ENCODE measurements at regions of chr5 and their contacts with region 1.

Region 1: GRCh38 chr5:40688127-40688761 is 8.5 kb downstream of the PTGER4 start:
- DNase-seq: peak; percentile 91
- ATAC-seq: peak; percentile 90
- H3K4me3 ChIP-seq: no peak overlapping the region
- H3K4me3 Mint-ChIP-seq: peak overlapping the region; percentile 9
- H3K27ac ChIP-seq: no peak overlapping the region
- H3K27ac Mint-ChIP-seq: peak overlapping the region; percentile 5
- H3K4me1 ChIP-seq: peaks cover 17 to 30% of the 10 kb centered on the region in 2 donors
- H3K4me1 Mint-ChIP-seq: peaks cover 53% of the 10 kb centered on the region
- H3K27me3 ChIP-seq: no peaks in the 10 kb centered on the region
- H3K27me3 Mint-ChIP-seq: no peaks in the 10 kb centered on the region
- CTCF ChIP-seq: peak; percentile 87

Region 2: DNA sequence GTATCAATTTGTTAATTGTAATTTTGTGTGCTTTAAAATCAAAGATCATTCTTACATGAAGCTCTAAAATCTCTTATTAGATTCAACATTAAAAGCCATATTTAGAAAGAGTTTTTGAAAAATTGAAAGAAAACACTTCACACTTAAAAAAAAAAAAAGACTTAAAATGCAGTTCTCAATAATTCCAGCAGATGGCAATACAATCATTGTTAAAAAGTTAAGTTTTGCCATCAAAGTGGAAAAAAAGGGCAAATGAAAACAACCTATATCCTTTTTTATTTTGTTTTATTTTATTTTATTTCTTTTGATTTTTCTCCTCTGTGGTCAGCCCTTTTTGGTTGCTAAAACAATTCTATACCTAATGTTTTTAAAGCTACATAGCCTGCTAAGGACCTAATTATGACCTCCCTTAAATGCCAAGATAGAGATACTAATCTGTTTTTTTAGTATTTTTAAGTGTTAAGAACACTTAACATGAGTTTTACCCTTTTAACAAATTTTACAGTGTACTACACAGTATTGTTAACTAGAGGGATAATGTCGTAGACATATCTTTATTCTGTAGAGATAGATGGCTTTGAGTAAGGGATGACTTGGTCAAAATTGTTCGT is 1109.3 kb before region 1 on chr5:
- CTCF ChIA-PET with region 1: interaction called, 7 read pairs
- POLR2A ChIA-PET with region 1: no interaction called
- intact Hi-C with region 1: loop called (anchors 1 kb)
- DNase-seq: peak; percentile 38
- ATAC-seq: no peak
- H3K4me3 ChIP-seq: no peak overlapping the region
- H3K4me3 Mint-ChIP-seq: no peak overlapping the region
- H3K27ac ChIP-seq: no peak overlapping the region
- H3K27ac Mint-ChIP-seq: no peak overlapping the region
- H3K4me1 ChIP-seq: peaks cover 7 to 11% of the 10 kb centered on the region in 2 donors
- H3K4me1 Mint-ChIP-seq: peaks cover 5% of the 10 kb centered on the region
- H3K27me3 ChIP-seq: no peaks in the 10 kb centered on the region
- H3K27me3 Mint-ChIP-seq: peaks cover 14% of the 10 kb centered on the region
- CTCF ChIP-seq: peak; percentile 95

Region 3: DNA sequence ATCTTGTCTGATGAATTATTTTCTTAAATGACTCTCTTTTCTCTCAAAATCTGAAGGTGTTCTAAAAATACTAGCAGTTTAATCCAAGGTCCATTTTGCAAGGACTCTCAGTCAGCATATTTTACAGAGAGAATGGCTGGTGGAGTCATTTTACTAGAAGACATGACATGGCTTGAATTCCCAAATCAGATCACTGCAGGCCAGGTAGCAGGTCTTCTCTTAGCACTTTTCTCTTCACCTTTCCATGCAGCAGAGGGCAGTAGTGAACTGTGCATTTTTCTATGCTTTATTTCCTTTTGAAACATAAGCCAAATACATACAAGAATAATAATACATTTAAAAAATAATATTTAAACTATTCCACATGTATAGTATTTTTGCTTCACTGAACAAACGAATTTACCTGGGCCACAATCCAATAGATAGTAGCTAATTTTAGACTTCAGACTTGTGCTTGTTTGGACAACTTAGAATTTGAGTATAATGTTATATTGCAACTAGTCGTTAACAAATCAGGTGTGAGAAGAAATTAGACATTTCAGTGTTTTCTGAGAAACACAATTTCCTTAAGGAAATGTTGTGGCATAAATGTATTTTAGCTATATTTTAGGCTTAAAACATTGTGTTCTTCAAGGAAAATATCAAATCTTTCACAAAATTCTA is 974.1 kb before region 1 on chr5:
- CTCF ChIA-PET with region 1: interaction called, 27 read pairs
- POLR2A ChIA-PET with region 1: no interaction called
- intact Hi-C with region 1: no loop called
- DNase-seq: peak; percentile 55
- ATAC-seq: no peak
- H3K4me3 ChIP-seq: no peak overlapping the region
- H3K4me3 Mint-ChIP-seq: no peak overlapping the region
- H3K27ac ChIP-seq: no peak overlapping the region
- H3K27ac Mint-ChIP-seq: no peak overlapping the region
- H3K4me1 ChIP-seq: no peaks in the 10 kb centered on the region
- H3K4me1 Mint-ChIP-seq: no peaks in the 10 kb centered on the region
- H3K27me3 ChIP-seq: peaks cover 0 to 3% (median 0%) of the 10 kb centered on the region in 4 experiments
- H3K27me3 Mint-ChIP-seq: no peaks in the 10 kb centered on the region
- CTCF ChIP-seq: peak; percentile 73

Region 4: GRCh38 chr5:40021007-40021406 is 667.2 kb before region 1 on chr5:
- CTCF ChIA-PET with region 1: interaction called, 92 read pairs
- POLR2A ChIA-PET with region 1: no interaction called
- intact Hi-C with region 1: loop called (anchors 1 kb)
- DNase-seq: peak; percentile 50
- ATAC-seq: peak; percentile 57
- H3K4me3 ChIP-seq: no peak overlapping the region
- H3K4me3 Mint-ChIP-seq: no peak overlapping the region
- H3K27ac ChIP-seq: no peak overlapping the region
- H3K27ac Mint-ChIP-seq: no peak overlapping the region
- H3K4me1 ChIP-seq: peaks cover 5 to 6% of the 10 kb centered on the region in 2 donors
- H3K4me1 Mint-ChIP-seq: peaks cover 20% of the 10 kb centered on the region
- H3K27me3 ChIP-seq: no peaks in the 10 kb centered on the region
- H3K27me3 Mint-ChIP-seq: no peaks in the 10 kb centered on the region
- CTCF ChIP-seq: peak; percentile 57

Region 5: GRCh38 chr5:40223884-40224402 is 464.3 kb before region 1 on chr5:
- CTCF ChIA-PET with region 1: no interaction called
- POLR2A ChIA-PET with region 1: no interaction called
- intact Hi-C with region 1: loop called (anchors 5 kb)
- DNase-seq: peak; percentile 33
- ATAC-seq: peak; percentile 11
- H3K4me3 ChIP-seq: no peak overlapping the region
- H3K4me3 Mint-ChIP-seq: peak overlapping the region; percentile 62
- H3K27ac ChIP-seq: no peak overlapping the region
- H3K27ac Mint-ChIP-seq: no peak overlapping the region
- H3K4me1 ChIP-seq: peaks cover 14 to 26% of the 10 kb centered on the region in 2 donors
- H3K4me1 Mint-ChIP-seq: peaks cover 34% of the 10 kb centered on the region
- H3K27me3 ChIP-seq: peaks cover 0 to 6% (median 2%) of the 10 kb centered on the region in 4 experiments
- H3K27me3 Mint-ChIP-seq: peaks cover 25% of the 10 kb centered on the region
- CTCF ChIP-seq: no peak

Region 6: GRCh38 chr5:40386289-40386688 is 302.0 kb before region 1 on chr5:
- CTCF ChIA-PET with region 1: interaction called, 4 read pairs
- POLR2A ChIA-PET with region 1: no interaction called
- intact Hi-C with region 1: loop called (anchors 5 kb)
- DNase-seq: peak; percentile 52
- ATAC-seq: peak; percentile 57
- H3K4me3 ChIP-seq: no peak overlapping the region
- H3K4me3 Mint-ChIP-seq: no peak overlapping the region
- H3K27ac ChIP-seq: no peak overlapping the region
- H3K27ac Mint-ChIP-seq: no peak overlapping the region
- H3K4me1 ChIP-seq: peaks cover 36 to 43% of the 10 kb centered on the region in 2 donors
- H3K4me1 Mint-ChIP-seq: peaks cover 45% of the 10 kb centered on the region
- H3K27me3 ChIP-seq: no peaks in the 10 kb centered on the region
- H3K27me3 Mint-ChIP-seq: no peaks in the 10 kb centered on the region
- CTCF ChIP-seq: no peak

Region 7: GRCh38 chr5:40634154-40634553 is 54.1 kb before region 1 on chr5:
- CTCF ChIA-PET with region 1: no interaction called
- POLR2A ChIA-PET with region 1: no interaction called
- intact Hi-C with region 1: no loop called
- DNase-seq: no peak
- ATAC-seq: no peak
- H3K4me3 ChIP-seq: no peak overlapping the region
- H3K4me3 Mint-ChIP-seq: no peak overlapping the region
- H3K27ac ChIP-seq: no peak overlapping the region
- H3K27ac Mint-ChIP-seq: no peak overlapping the region
- H3K4me1 ChIP-seq: peaks cover 5% of the 10 kb centered on the region in 2 donors
- H3K4me1 Mint-ChIP-seq: peaks cover 8% of the 10 kb centered on the region
- H3K27me3 ChIP-seq: no peaks in the 10 kb centered on the region
- H3K27me3 Mint-ChIP-seq: no peaks in the 10 kb centered on the region
- CTCF ChIP-seq: no peak

Region 8: DNA sequence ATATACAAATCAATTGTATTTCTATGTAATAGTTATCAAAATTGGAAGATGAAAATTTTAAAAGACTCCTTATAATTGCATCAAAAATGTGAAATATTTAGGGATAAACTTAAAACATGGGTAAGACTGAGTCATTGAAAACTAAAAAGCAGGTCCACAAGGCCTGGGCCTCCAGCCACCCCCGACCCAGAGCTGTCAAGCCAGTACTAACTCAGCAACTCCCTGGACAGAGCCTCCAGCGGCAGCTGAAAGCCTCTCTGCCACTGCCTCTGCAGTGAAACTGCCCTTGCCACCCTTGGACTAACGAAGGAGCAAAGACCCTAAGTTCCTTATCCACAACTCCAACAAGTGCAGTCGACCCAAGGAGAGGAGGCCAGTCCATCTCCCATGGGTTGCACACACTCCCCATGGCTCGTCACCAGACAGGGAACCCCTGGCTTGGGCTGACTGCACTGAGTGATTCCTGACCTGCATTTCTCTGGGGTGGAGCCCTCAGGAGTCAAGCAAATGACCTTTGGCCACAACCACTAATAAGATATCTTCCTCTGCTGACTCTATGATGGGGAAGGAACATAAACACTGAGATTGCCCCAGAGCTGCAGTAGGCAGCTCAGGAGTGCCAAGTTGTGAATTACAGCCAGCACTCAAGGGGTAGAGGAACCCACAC is 12.0 kb after region 1 on chr5:
- CTCF ChIA-PET with region 1: no interaction called
- POLR2A ChIA-PET with region 1: no interaction called
- intact Hi-C with region 1: no loop called
- DNase-seq: no peak
- ATAC-seq: no peak
- H3K4me3 ChIP-seq: no peak overlapping the region
- H3K4me3 Mint-ChIP-seq: no peak overlapping the region
- H3K27ac ChIP-seq: no peak overlapping the region
- H3K27ac Mint-ChIP-seq: no peak overlapping the region
- H3K4me1 ChIP-seq: no peaks in the 10 kb centered on the region
- H3K4me1 Mint-ChIP-seq: peaks cover under 1% of the 10 kb centered on the region
- H3K27me3 ChIP-seq: no peaks in the 10 kb centered on the region
- H3K27me3 Mint-ChIP-seq: no peaks in the 10 kb centered on the region
- CTCF ChIP-seq: no peak

Region 9: DNA sequence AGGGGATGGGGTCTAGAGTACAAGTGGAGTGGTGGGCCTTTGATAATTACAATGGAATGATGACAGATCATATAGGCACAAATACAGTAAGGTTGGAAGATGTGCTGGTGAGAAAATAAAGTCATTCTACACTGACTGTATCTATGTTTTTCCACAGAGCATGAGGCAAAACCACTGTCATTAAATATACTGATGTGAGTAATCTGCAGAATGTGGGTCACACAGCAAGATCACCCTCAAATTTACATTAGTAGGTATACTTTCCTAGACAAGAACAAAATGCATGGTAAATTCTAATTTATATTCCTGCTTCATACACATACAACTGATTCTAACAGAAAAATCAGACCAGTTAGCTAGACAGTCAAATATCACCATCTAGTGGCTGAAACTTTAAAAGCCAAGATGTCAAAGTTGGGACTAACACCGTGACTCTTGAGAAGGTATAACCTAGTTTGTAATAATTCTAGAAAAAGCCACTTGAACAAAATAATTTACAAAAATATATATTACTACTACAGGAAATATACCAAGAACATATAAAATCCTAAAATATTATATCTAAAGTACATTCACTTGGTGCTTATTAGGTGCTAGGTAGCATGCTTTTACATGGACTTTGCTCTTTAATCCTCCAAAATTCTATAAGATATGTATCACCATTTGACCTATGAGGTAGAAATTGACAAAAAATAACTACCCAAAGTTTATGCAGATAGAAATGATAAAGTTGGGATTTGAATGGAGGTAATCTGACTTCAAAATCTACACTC is 48.0 kb after region 1 on chr5:
- CTCF ChIA-PET with region 1: interaction called, 5 read pairs
- POLR2A ChIA-PET with region 1: no interaction called
- intact Hi-C with region 1: loop called (anchors 1 kb)
- DNase-seq: peak; percentile 68
- ATAC-seq: no peak
- H3K4me3 ChIP-seq: no peak overlapping the region
- H3K4me3 Mint-ChIP-seq: no peak overlapping the region
- H3K27ac ChIP-seq: no peak overlapping the region
- H3K27ac Mint-ChIP-seq: no peak overlapping the region
- H3K4me1 ChIP-seq: no peaks in the 10 kb centered on the region
- H3K4me1 Mint-ChIP-seq: peaks cover 4% of the 10 kb centered on the region
- H3K27me3 ChIP-seq: no peaks in the 10 kb centered on the region
- H3K27me3 Mint-ChIP-seq: no peaks in the 10 kb centered on the region
- CTCF ChIP-seq: peak; percentile 93

Region 10: GRCh38 chr5:40812125-40812524 is 123.9 kb after region 1 on chr5:
- CTCF ChIA-PET with region 1: no interaction called
- POLR2A ChIA-PET with region 1: no interaction called
- intact Hi-C with region 1: no loop called
- DNase-seq: no peak
- ATAC-seq: no peak
- H3K4me3 ChIP-seq: no peak overlapping the region
- H3K4me3 Mint-ChIP-seq: no peak overlapping the region
- H3K27ac ChIP-seq: no peak overlapping the region
- H3K27ac Mint-ChIP-seq: no peak overlapping the region
- H3K4me1 ChIP-seq: no peaks in the 10 kb centered on the region
- H3K4me1 Mint-ChIP-seq: no peaks in the 10 kb centered on the region
- H3K27me3 ChIP-seq: no peaks in the 10 kb centered on the region
- H3K27me3 Mint-ChIP-seq: no peaks in the 10 kb centered on the region
- CTCF ChIP-seq: no peak

Region 11: DNA sequence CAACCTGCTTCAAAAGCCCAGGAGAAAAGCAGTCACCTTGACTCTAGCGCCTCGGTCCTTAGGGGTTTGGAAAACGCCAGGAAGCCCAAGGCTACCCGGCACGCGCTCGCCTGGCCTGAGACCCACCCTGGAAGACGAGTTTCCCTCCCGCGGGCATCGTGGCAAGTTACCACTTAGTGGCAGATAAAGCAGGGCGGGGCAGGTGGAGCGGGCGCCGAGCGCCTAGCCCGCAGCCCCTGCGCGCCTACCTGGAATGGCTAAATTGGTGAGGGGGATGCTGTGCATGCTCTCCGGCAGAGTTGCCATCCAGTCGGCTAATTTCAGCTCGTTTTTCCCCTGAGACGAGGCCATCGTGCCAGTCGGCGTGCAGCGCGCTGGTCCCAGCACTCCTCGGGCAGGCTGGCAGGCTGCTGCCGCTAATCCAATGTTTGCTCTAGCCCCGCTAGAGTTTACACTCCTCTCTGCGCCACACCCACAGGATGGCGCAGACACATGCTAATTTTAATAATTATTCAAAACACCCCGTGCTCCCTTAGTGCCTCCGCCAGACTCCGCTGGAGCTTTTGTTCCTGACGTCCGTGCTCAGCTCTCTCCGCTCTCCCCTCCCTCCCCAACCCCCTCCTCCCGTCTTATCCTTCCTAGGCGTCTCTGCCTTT is 822.1 kb after region 1 on chr5 and contains the start of gene PLCXD3:
- CTCF ChIA-PET with region 1: no interaction called
- POLR2A ChIA-PET with region 1: no interaction called
- intact Hi-C with region 1: no loop called
- DNase-seq: no peak
- ATAC-seq: no peak
- H3K4me3 ChIP-seq: no peak within 1 kb of the TSS
- H3K4me3 Mint-ChIP-seq: no peak within 1 kb of the TSS
- H3K27ac ChIP-seq: no peak within 1 kb of the TSS
- H3K27ac Mint-ChIP-seq: no peak within 1 kb of the TSS
- H3K4me1 ChIP-seq: no peaks in the 10 kb centered on the region
- H3K4me1 Mint-ChIP-seq: no peaks in the 10 kb centered on the region
- H3K27me3 ChIP-seq: peaks cover 0 to 10% (median 4%) of the 10 kb centered on the region in 4 experiments
- H3K27me3 Mint-ChIP-seq: peaks cover 33% of the 10 kb centered on the region
- CTCF ChIP-seq: no peak
- total RNA-seq, gene PLCXD3: not detected in 2 replicates

Measured in B cell (primary cell).